Mucosa of descending colon (tissue), 3 donors: ENCODE measurements at regions of chr3 and their contacts with region 1.

Region 1: DNA sequence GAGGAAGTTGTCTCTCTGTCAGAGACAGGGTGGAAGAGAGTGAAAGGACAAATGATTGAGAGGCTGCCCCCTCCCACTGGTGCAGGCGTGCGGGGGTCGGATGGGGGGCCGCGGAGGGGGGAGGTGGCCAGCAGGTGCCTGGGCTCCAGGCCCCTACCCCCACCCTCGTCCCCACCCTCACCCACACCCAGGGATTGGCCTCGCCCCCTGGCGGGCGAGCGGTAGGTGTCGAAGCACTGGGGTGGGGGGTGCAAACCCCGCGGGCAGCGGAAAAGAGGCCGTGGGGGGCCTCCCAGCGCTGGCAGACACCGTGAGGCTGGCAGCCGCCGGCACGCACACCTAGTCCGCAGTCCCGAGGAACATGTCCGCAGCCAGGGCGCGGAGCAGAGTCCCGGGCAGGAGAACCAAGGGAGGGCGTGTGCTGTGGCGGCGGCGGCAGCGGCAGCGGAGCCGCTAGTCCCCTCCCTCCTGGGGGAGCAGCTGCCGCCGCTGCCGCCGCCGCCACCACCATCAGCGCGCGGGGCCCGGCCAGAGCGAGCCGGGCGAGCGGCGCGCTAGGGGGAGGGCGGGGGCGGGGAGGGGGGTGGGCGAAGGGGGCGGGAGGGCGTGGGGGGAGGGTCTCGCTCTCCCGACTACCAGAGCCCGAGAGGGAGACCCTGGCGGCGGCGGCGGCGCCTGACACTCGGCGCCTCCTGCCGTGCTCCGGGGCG is at the start of gene KAT2B:
- DNase-seq: peak; percentile 86 to 91 (median 91)
- ATAC-seq: peak; percentile 79
- H3K4me3 ChIP-seq: peak within 1 kb of the TSS; percentile 61
- H3K4me1 ChIP-seq: peaks cover 30% of the 10 kb centered on the region
- CTCF ChIP-seq: peak; percentile 47
- total RNA-seq, gene KAT2B: 27.2 to 49.1 (median 27.5) TPM

Region 2: DNA sequence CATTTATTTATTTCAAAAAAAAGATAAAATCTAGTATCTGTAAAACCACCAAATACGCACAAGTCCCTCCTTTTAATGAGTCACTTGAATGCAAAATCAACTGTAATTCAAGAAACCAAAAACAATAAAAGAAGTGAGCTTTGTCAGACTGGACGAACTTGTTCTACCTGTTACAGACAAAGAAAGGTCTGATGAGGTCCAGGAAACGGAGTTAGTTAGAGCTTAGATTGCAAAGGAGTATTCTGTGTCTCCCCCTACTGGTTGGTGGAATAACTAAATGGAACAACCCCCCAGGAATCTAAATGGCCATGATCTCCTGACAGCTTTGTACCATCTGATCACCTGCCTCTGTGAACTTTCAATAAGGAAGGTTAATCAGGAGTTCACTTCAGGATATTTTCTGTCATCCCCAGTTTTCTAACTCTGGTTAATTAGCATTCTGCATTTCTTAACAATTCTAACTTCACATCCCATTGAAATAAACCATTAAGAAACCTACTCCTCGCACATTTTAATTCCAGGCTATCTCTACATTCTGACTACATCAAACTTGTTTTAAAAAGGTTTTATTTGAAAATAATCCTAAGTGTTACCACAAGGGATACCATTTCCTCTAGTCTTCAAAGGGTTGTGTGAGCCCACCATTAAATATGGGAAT is 1281.7 kb before region 1 on chr3:
- intact Hi-C with region 1: no loop called
- DNase-seq: peak in 1 of 3 donors; percentile 81
- ATAC-seq: peak; percentile 98
- H3K4me3 ChIP-seq: no peak overlapping the region
- H3K4me1 ChIP-seq: peaks cover 11% of the 10 kb centered on the region
- CTCF ChIP-seq: peak; percentile 27

Region 3: DNA sequence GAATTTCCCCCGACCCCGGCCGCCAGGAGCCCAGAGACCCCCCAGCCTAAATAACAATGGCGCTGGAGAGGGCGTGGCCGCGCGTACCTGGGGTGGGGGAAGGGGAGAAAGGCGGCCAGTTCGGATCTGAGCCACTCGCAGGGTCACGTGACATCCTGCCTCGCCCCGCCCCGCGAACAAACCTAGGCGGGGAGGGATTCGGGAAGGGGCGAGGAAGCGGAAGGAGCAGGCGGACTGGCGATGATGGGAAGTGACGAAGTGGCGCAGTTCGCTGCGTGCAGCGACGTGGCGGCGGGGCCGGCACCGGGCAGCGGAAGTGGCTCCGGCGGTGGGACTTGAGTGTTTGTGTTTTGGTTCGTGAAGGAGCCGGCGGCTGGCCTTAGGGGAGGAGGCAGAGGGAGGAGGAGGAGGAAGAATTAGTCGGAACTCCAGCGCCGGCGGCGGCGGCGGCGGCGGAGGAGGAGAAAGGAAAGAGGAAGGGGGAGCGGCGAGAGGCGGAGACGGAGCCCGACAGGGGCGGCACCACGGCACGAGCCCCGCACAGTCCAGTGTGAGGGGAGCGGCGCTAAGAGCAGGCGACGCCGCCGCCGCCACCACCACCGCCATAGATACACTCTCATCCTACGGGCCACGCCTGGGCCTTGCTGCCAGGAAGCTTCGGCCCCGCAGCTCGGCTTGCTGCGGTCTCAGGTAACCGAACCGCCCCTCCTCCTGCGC is 92.9 kb before region 1 on chr3 and contains the start of gene RAB5A:
- intact Hi-C with region 1: loop called in 1 of 2 experiments (anchors 10 kb)
- DNase-seq: peak; percentile 99
- ATAC-seq: peak; percentile 94
- H3K4me3 ChIP-seq: peak within 1 kb of the TSS; percentile 97
- H3K4me1 ChIP-seq: peaks cover 19% of the 10 kb centered on the region
- CTCF ChIP-seq: no peak
- total RNA-seq, gene RAB5A: 68.6 to 73.4 (median 69.2) TPM

Region 4: GRCh38 chr3:20264934-20265567 is 225.1 kb after region 1 on chr3:
- intact Hi-C with region 1: no loop called
- DNase-seq: no peak
- ATAC-seq: no peak
- H3K4me3 ChIP-seq: no peak overlapping the region
- H3K4me1 ChIP-seq: no peaks in the 10 kb centered on the region
- CTCF ChIP-seq: no peak

Region 5: DNA sequence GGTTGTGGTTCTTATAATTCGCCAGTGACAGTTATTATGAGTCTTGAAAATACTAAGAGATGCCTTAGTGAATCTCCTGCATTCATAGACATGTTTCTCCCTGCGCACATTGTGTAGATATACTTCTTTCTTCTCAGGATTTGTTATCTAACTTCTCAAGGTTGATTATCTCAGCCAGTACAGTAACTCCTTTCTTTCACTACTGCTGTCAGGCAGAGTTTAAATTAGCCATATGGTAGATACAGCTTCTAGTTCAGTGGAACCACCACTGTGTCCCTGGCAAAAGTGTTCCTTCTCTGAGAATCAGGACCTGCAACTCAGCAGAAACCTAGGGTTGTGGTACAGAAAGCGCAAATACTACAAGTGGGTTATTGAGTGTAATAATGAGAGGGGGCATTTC is 321.1 kb after region 1 on chr3:
- intact Hi-C with region 1: no loop called
- DNase-seq: no peak
- ATAC-seq: no peak
- H3K4me3 ChIP-seq: no peak overlapping the region
- H3K4me1 ChIP-seq: no peaks in the 10 kb centered on the region
- CTCF ChIP-seq: no peak

Region 6: GRCh38 chr3:20811631-20812030 is 771.7 kb after region 1 on chr3:
- intact Hi-C with region 1: no loop called
- DNase-seq: no peak
- ATAC-seq: no peak
- H3K4me3 ChIP-seq: no peak overlapping the region
- H3K4me1 ChIP-seq: no peaks in the 10 kb centered on the region
- CTCF ChIP-seq: no peak